H1 (cell line): ENCODE measurements at regions of chr1 and their contacts with region 1.

Region 1: DNA sequence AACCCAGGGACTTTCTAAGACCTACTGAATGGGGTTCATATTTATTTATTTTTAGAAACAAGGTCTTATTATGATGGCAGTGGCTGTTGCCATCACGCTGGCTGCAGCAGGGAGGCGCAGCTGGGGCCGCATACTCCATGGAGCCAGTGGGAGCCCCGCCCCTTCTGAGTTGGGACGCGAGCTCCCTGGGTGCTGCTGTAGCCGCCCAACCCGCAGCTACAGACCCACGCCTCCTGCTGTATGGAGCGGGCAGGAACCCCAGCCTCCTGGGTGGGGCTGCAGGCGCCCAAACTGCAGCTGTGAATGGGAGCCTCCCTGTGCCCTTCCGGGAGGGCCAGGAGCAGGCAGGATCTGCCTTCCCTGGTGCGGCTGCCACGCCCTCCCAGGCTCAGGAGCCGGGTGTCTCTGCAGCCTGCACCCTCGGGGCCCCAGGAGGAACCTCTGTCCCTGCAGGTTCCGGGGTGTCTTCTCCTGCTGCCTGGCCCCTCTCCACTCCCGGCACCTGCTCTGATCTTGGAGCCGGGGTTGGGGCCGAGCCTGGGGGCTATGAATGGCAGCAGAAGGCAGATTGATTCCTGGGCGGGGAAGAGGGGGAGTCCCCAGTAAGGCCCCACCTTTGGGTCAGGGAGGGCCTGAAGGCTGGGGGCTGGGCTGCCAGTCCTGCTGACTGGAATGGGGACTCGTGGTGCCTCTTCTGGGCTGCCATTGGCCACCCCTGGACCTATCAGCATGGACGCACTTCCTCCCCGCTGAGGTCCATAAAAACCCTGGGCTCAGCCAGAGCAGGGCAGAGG is 66.6 kb upstream of the LRRN2 start:
- DNase-seq: peak; percentile 31 to 65
- H3K4me3 ChIP-seq: no peak overlapping the region
- H3K27ac ChIP-seq: no peak overlapping the region
- H3K4me1 ChIP-seq: peaks cover 0 to 7% (median 5%) of the 10 kb centered on the region in 4 experiments; a peak in 5 of 7 replicates
- H3K27me3 ChIP-seq: no peaks in the 10 kb centered on the region
- CTCF ChIP-seq: no peak; a peak in 1 of 4 replicates
- EP300 ChIP-seq: no peak
- POLR2A ChIP-seq: no peak
- RAD21 ChIP-seq: peak in 1 of 2 experiments; percentile 26; a peak in 1 of 4 replicates

Region 2: GRCh38 chr1:204190212-204191211 is 561.6 kb before region 1 on chr1:
- CTCF ChIA-PET with region 1: no interaction called
- POLR2A ChIA-PET with region 1: no interaction called
- DNase-seq: peak in 1 of 2 experiments; percentile 84
- H3K4me3 ChIP-seq: peak overlapping the region; percentile 20 to 57 (median 23)
- H3K27ac ChIP-seq: no peak overlapping the region
- H3K4me1 ChIP-seq: no peaks in the 10 kb centered on the region
- H3K27me3 ChIP-seq: peaks cover 0 to 8% (median 6%) of the 10 kb centered on the region in 4 experiments; a peak in 4 of 7 replicates
- CTCF ChIP-seq: no peak
- EP300 ChIP-seq: no peak
- POLR2A ChIP-seq: no peak
- RAD21 ChIP-seq: no peak

Region 3: GRCh38 chr1:204685236-204686006 is 66.7 kb before region 1 on chr1 and contains the start of gene LRRN2:
- CTCF ChIA-PET with region 1: interaction called, 34 read pairs
- POLR2A ChIA-PET with region 1: no interaction called
- DNase-seq: peak in 1 of 2 experiments; percentile 66
- H3K4me3 ChIP-seq: peak within 1 kb of the TSS; percentile 43 to 66 (median 60)
- H3K27ac ChIP-seq: no peak within 1 kb of the TSS
- H3K4me1 ChIP-seq: peaks cover 0 to 12% (median 7%) of the 10 kb centered on the region in 4 experiments; a peak in 6 of 7 replicates
- H3K27me3 ChIP-seq: peaks cover 13 to 50% (median 44%) of the 10 kb centered on the region in 4 experiments
- CTCF ChIP-seq: no peak; a peak in 1 of 4 replicates
- EP300 ChIP-seq: no peak
- POLR2A ChIP-seq: no peak
- RAD21 ChIP-seq: no peak
- total RNA-seq, gene LRRN2: 2.3 and 2.5 TPM in 2 replicates

Region 4: DNA sequence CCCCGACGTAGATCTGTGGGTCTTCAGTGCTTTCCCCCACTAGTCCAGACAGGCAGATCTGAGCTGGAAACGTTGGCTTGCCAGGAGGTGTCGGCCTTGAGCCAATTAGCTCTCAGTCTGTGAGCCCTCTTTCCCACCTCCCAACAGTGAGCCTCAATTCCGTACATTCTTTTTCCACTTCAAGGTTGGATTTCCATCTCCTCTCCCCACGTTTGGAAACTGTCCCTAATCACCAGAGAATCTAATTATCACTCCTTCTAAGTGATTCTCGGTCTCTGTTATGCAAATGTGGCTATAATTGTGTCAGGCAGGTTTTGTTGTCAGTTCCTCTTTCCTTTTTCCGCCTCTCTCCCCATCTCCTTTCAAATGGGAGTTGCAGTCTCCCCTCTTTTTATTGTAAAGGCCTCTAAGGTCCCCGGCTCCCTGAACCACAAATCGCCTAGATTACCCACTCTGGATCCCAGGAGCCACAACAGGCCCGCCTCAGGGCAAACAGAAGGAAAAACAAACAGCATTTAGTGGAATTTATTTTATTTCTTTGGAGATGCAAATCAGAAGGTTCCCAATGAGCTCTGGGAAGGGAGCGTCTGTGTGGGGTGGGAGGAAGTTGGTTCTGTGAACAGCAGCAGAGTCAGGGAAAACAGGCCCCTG is 37.1 kb before region 1 on chr1:
- CTCF ChIA-PET with region 1: interaction called, 35 read pairs
- POLR2A ChIA-PET with region 1: no interaction called
- DNase-seq: no peak
- H3K4me3 ChIP-seq: peak overlapping the region in 1 of 4 experiments; percentile 38; a peak in 2 of 8 replicates
- H3K27ac ChIP-seq: no peak overlapping the region
- H3K4me1 ChIP-seq: peaks cover 12 to 29% (median 20%) of the 10 kb centered on the region in 4 experiments
- H3K27me3 ChIP-seq: peaks cover 22 to 54% (median 46%) of the 10 kb centered on the region in 4 experiments
- CTCF ChIP-seq: peak; percentile 55 to 72 (median 65)
- EP300 ChIP-seq: no peak
- POLR2A ChIP-seq: no peak
- RAD21 ChIP-seq: peak; percentile 69 to 74

Region 5: GRCh38 chr1:204730826-204731459 is 21.1 kb before region 1 on chr1:
- CTCF ChIA-PET with region 1: interaction called, 40 read pairs
- POLR2A ChIA-PET with region 1: no interaction called
- DNase-seq: peak in 1 of 2 experiments; percentile 41
- H3K4me3 ChIP-seq: no peak overlapping the region
- H3K27ac ChIP-seq: no peak overlapping the region
- H3K4me1 ChIP-seq: peaks cover 0 to 6% (median 2%) of the 10 kb centered on the region in 4 experiments; a peak in 3 of 7 replicates
- H3K27me3 ChIP-seq: no peaks in the 10 kb centered on the region; a peak in 1 of 7 replicates
- CTCF ChIP-seq: no peak
- EP300 ChIP-seq: no peak
- POLR2A ChIP-seq: no peak
- RAD21 ChIP-seq: no peak

Region 6: DNA sequence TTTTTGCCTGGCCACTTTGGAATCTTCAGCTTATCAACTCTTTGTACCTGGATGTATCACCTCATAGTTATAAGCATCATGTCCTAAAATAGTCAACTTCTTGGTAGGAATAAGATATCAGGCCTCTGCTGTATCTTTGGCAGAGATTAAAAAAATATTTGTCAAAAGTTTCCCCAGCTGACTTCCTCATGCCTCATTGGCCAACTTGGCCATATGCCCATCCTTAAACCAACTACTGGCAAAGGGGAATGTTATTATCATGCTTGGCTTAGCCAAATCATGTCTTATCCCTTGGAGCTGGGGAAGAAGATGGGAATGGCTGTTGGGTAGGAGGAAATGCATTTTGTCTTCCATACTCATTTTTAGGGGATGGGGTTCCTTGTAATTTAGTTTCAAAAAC is 141.9 kb after region 1 on chr1:
- CTCF ChIA-PET with region 1: no interaction called
- POLR2A ChIA-PET with region 1: no interaction called
- DNase-seq: no peak
- H3K4me3 ChIP-seq: no peak overlapping the region
- H3K27ac ChIP-seq: no peak overlapping the region
- H3K4me1 ChIP-seq: peaks cover 0 to 5% (median under 1%) of the 10 kb centered on the region in 4 experiments; a peak in 1 of 7 replicates
- H3K27me3 ChIP-seq: no peaks in the 10 kb centered on the region
- CTCF ChIP-seq: no peak
- EP300 ChIP-seq: no peak
- POLR2A ChIP-seq: no peak
- RAD21 ChIP-seq: no peak

Region 7: GRCh38 chr1:205020466-205020865 is 268.4 kb after region 1 on chr1:
- CTCF ChIA-PET with region 1: no interaction called
- POLR2A ChIA-PET with region 1: no interaction called
- DNase-seq: no peak
- H3K4me3 ChIP-seq: no peak overlapping the region
- H3K27ac ChIP-seq: no peak overlapping the region
- H3K4me1 ChIP-seq: no peaks in the 10 kb centered on the region
- H3K27me3 ChIP-seq: no peaks in the 10 kb centered on the region; a peak in 1 of 7 replicates
- CTCF ChIP-seq: no peak
- EP300 ChIP-seq: no peak
- POLR2A ChIP-seq: no peak
- RAD21 ChIP-seq: no peak

Region 8: GRCh38 chr1:205077158-205077933 is 325.3 kb after region 1 on chr1:
- CTCF ChIA-PET with region 1: no interaction called
- POLR2A ChIA-PET with region 1: no interaction called
- DNase-seq: no peak
- H3K4me3 ChIP-seq: no peak overlapping the region
- H3K27ac ChIP-seq: no peak overlapping the region
- H3K4me1 ChIP-seq: no peaks in the 10 kb centered on the region
- H3K27me3 ChIP-seq: no peaks in the 10 kb centered on the region
- CTCF ChIP-seq: no peak
- EP300 ChIP-seq: no peak
- POLR2A ChIP-seq: no peak
- RAD21 ChIP-seq: no peak